PC-3 (cell line): ENCODE measurements at regions of chr3 and their contacts with region 1.

Region 1: GRCh38 chr3:71389911-71390573 is 193.5 kb downstream of the FOXP1 start:
- DNase-seq: peak; percentile 65
- ATAC-seq: peak; percentile 81
- H3K4me3 ChIP-seq: peak overlapping the region; percentile 52
- H3K27ac ChIP-seq: peak overlapping the region; percentile 5; the same call in 1 of the 2 replicates
- H3K4me1 ChIP-seq: peaks cover 15% of the 10 kb centered on the region
- H3K27me3 ChIP-seq: no peaks in the 10 kb centered on the region
- CTCF ChIP-seq: no peak

Region 2: DNA sequence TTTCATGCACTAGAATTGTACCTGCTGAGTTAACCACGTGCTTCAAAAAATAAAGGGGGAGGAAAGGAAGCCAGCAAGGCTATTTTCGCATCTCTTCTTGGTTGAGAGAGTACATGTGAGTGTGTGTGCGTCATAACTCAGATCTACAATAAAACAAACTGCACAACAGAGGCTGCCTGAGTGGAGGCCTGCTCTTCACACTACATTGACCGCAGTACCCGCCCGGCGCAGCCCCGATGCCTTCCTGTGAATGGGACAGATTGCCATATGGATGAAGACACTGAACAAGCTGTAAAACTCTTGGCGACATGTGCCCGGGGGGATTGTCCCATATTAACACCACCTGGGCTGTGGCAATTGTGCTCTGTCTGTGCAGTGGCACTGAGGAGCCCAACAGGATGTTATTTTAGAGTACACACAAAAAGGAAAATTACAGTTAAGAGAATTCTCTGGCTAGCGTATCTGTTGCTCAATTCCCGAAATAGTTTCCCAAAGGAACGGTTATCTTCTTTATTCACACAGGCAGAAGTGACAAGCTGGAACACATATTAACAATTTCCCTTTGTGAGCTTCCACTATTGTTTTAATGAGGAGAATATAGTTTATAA is 358.0 kb before region 1 on chr3:
- CTCF ChIA-PET with region 1: no interaction called
- POLR2A ChIA-PET with region 1: interaction called, 16 read pairs
- intact Hi-C with region 1: no loop called
- DNase-seq: no peak
- ATAC-seq: no peak
- H3K4me3 ChIP-seq: no peak overlapping the region
- H3K27ac ChIP-seq: peak overlapping the region; percentile 36; the same call in 1 of the 2 replicates
- H3K4me1 ChIP-seq: peaks cover 37% of the 10 kb centered on the region
- H3K27me3 ChIP-seq: no peaks in the 10 kb centered on the region
- CTCF ChIP-seq: no peak

Region 3: GRCh38 chr3:71103430-71103921 is 286.6 kb before region 1 on chr3:
- CTCF ChIA-PET with region 1: no interaction called
- POLR2A ChIA-PET with region 1: no interaction called
- intact Hi-C with region 1: no loop called
- DNase-seq: peak; percentile 79
- ATAC-seq: peak; percentile 7
- H3K4me3 ChIP-seq: no peak overlapping the region
- H3K27ac ChIP-seq: peak overlapping the region; percentile 74
- H3K4me1 ChIP-seq: peaks cover 54% of the 10 kb centered on the region
- H3K27me3 ChIP-seq: no peaks in the 10 kb centered on the region
- CTCF ChIP-seq: no peak